ENCODE measurements at regions of chrX and their contacts with region 1.

Region 1: GRCh38 chrX:152941328-152942106 is 43.6 kb downstream of the ZNF185 start:
- DNase-seq: peak; percentile 93 to 96
- H3K4me3 ChIP-seq: peak overlapping the region; percentile 51
- H3K4me1 ChIP-seq: peaks cover 12% of the 10 kb centered on the region
- H3K27me3 ChIP-seq: no peaks in the 10 kb centered on the region

Region 2: DNA sequence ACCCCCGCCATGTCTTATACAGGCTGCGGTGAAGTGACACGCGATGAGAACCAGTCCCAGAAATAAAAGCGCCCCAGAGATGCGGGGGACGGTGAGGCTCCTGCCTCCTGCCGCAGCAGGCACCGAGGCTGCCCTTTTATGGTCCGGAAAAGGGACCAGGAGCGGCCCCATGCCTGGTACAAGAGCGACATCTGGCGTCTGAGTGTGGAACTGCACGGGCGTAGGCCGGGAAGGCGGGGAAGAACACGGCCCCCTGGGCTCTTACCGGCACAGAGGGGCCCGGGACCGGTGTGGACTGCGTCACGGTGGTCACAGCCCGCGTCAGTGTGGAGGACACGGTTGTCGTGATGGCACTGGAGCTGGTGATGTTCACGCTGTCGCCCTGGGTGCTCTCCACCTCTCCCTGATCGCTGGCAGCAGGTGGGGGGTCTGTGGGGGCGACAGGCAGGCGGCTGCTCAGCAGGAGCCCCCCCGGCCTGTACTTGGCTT is 1011.9 kb after region 1 on chrX:
- in situ Hi-C with region 1: loop called (anchors 10 kb)
- DNase-seq: peak; percentile 53 to 91
- H3K4me3 ChIP-seq: no peak overlapping the region
- H3K4me1 ChIP-seq: no peaks in the 10 kb centered on the region
- H3K27me3 ChIP-seq: no peaks in the 10 kb centered on the region

Region 3: GRCh38 chrX:154327038-154327820 is 1385.7 kb after region 1 on chrX:
- in situ Hi-C with region 1: loop called (anchors 25 kb)
- DNase-seq: no peak
- H3K4me3 ChIP-seq: no peak overlapping the region
- H3K4me1 ChIP-seq: peaks cover 36% of the 10 kb centered on the region
- H3K27me3 ChIP-seq: no peaks in the 10 kb centered on the region

Measured in HAP-1 (cell line).